ENCODE measurements at regions of chr12 and their contacts with region 1.

Region 1: GRCh38 chr12:95217377-95218149 is at the starts of genes FGD6 and VEZT:
- DNase-seq: peak; percentile 99
- H3K4me3 Mint-ChIP-seq: peak within 1 kb of the TSS; percentile 98
- H3K27ac Mint-ChIP-seq: peak within 1 kb of the TSS; percentile 97
- H3K4me1 Mint-ChIP-seq: peaks cover 30% of the 10 kb centered on the region
- H3K27me3 Mint-ChIP-seq: no peaks in the 10 kb centered on the region
- total RNA-seq, gene FGD6: 2.0 TPM
- total RNA-seq, gene VEZT: 41.3 to 42.5 TPM

Region 2: GRCh38 chr12:93677195-93678064 is 1540.1 kb before region 1 on chr12 and contains the start of gene CRADD:
- CTCF ChIA-PET with region 1: no interaction called
- intact Hi-C with region 1: loop called (anchors 5 kb)
- DNase-seq: peak; percentile 92
- H3K4me3 Mint-ChIP-seq: peak within 1 kb of the TSS; percentile 89
- H3K27ac Mint-ChIP-seq: peak within 1 kb of the TSS; percentile 99
- H3K4me1 Mint-ChIP-seq: peaks cover 40% of the 10 kb centered on the region
- H3K27me3 Mint-ChIP-seq: peaks cover 9% of the 10 kb centered on the region
- total RNA-seq, gene CRADD: 14.3 to 15.6 TPM

Region 3: DNA sequence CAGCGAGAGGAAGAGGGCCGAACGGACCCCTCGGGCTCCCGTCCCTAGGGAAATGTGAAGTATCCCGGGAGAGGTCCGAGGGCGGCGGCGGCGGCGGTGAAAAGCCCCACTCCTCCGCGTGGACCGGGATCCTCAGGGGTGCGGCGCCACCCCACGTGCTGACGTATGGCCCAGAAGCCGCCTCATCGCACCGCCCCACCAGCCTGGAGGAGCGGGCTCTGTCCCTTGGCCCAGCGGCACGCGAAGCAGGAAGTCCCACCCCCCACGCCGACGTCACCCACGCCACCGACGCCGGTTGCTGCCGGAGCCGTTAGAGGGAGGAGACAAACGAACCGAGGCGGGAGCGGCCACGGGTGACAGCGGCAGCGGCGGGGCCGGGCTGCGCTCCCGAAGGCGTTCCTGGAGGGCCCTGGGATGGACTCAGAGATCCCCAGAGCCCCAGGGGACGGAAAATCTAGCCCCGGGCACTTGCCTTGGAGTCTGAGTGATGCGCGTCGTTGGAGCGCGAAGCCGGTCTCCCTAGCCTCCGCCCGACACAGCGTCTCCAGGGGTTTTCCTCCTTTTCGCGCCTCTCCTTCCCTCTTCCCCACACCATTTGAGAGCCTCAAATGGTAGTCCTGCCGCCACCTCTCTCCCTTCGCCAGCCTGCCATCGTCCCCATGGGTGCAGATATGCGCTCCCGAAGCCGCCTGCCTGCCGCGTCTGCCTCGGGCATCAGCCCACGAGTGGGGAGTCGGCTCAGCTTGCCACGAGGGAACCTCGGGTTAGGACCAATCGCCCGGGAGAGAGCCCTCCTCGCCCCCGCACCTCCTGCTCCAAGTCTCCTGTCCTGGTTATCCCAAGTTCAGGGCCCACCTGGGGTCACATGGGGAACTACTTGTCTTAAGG is 757.6 kb before region 1 on chr12 and contains the start of gene CEP83:
- CTCF ChIA-PET with region 1: no interaction called
- intact Hi-C with region 1: loop called (anchors 1 kb)
- DNase-seq: peak; percentile 98
- H3K4me3 Mint-ChIP-seq: peak within 1 kb of the TSS; percentile 97
- H3K27ac Mint-ChIP-seq: peak within 1 kb of the TSS; percentile 91
- H3K4me1 Mint-ChIP-seq: peaks cover 29% of the 10 kb centered on the region
- H3K27me3 Mint-ChIP-seq: peaks cover 5% of the 10 kb centered on the region
- total RNA-seq, gene CEP83: 19.0 to 21.5 TPM

Region 4: GRCh38 chr12:95102916-95103671 is 114.5 kb before region 1 on chr12:
- CTCF ChIA-PET with region 1: no interaction called
- intact Hi-C with region 1: loop called (anchors 1 kb)
- DNase-seq: peak; percentile 70
- H3K4me3 Mint-ChIP-seq: no peak overlapping the region
- H3K27ac Mint-ChIP-seq: no peak overlapping the region
- H3K4me1 Mint-ChIP-seq: peaks cover 10% of the 10 kb centered on the region
- H3K27me3 Mint-ChIP-seq: no peaks in the 10 kb centered on the region

Region 5: GRCh38 chr12:95396849-95397468 is 179.4 kb after region 1 on chr12:
- CTCF ChIA-PET with region 1: no interaction called
- intact Hi-C with region 1: loop called (anchors 1 kb)
- DNase-seq: peak; percentile 21
- H3K4me3 Mint-ChIP-seq: no peak overlapping the region
- H3K27ac Mint-ChIP-seq: peak overlapping the region; percentile 54
- H3K4me1 Mint-ChIP-seq: peaks cover 22% of the 10 kb centered on the region
- H3K27me3 Mint-ChIP-seq: peaks cover 25% of the 10 kb centered on the region

Region 6: GRCh38 chr12:95548539-95549391 is 331.2 kb after region 1 on chr12:
- CTCF ChIA-PET with region 1: no interaction called
- intact Hi-C with region 1: loop called (anchors 1 kb)
- DNase-seq: peak; percentile 75
- H3K4me3 Mint-ChIP-seq: peak overlapping the region; percentile 89
- H3K27ac Mint-ChIP-seq: peak overlapping the region; percentile 80
- H3K4me1 Mint-ChIP-seq: peaks cover 41% of the 10 kb centered on the region
- H3K27me3 Mint-ChIP-seq: no peaks in the 10 kb centered on the region

Region 7: DNA sequence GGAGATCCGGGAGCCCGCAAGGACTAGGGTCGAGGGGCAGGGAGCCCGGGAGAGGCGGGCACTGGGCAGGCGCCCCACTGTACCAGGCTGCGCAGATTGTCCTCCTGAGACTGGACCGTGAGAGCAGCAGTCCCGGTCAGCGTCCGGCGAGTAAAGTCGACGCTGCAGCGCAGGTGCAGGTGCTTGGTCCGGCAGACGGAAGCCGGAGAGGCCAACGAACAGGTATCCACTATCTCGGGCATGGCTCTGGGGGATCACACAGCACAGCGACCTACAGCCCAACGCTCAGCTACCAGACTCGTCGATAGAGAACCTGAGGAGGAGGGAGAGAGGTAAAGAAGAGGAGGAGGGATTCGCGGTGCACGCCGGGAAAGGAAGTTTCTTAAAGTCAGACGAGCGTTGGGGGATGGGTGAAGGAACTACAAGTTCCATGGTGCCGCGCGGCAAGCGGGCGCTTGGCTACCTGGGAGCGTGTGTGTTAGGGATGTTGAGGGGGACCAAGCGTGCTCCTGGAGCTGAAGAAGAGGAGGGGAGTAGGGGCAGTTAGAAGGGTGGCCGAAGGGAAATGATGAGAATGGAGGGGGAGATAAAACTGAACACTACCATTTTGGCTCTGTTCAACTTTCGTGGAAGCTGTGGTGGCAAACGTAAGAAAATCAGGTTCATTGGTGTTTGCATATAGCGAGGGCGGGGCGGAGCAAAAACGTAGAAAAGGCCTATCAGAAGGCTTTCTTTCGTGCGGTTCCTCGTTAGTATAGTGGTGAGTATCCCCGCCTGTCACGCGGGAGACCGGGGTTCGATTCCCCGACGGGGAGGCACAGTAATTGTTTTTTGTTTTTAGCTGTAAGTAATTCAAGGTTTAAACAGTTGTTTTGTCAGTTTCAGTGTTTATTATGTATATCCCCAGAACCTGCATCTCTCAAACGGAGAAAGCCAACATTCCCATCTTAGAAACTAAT is 818.0 kb after region 1 on chr12 and contains the start of gene LTA4H:
- CTCF ChIA-PET with region 1: no interaction called
- intact Hi-C with region 1: loop called (anchors 1 kb)
- DNase-seq: peak; percentile 98
- H3K4me3 Mint-ChIP-seq: no peak within 1 kb of the TSS
- H3K27ac Mint-ChIP-seq: no peak within 1 kb of the TSS
- H3K4me1 Mint-ChIP-seq: peaks cover 19% of the 10 kb centered on the region
- H3K27me3 Mint-ChIP-seq: no peaks in the 10 kb centered on the region
- total RNA-seq, gene LTA4H: 125 TPM